ENCODE measurements at regions of chr18 and their contacts with region 1.

Region 1: DNA sequence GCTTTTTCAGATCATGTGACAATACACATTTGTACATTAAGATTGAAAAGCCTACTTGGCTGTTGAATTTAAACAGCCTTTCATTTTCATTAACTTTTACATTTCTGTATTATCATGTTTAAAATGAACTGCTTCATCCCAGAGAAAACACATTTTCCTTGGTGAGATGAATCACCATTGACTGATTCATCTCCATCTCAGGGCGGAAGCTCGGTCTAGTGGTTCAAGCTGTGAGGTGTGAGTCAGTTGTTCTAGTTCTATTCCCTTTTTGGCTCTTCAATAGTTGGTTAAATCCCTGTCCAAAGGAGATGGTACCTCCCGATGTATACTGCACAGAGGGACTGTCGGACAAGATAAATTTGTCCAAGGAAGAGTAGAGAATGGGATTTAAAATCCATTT is 189.7 kb downstream of the ADCYAP1 start:
- DNase-seq: no peak
- ATAC-seq: no peak
- H3K4me3 ChIP-seq: no peak overlapping the region
- H3K4me3 Mint-ChIP-seq: no peak overlapping the region
- H3K27ac ChIP-seq: no peak overlapping the region
- H3K27ac Mint-ChIP-seq: no peak overlapping the region
- H3K4me1 ChIP-seq: no peaks in the 10 kb centered on the region
- H3K4me1 Mint-ChIP-seq: no peaks in the 10 kb centered on the region
- H3K27me3 ChIP-seq: no peaks in the 10 kb centered on the region
- H3K27me3 Mint-ChIP-seq: peaks cover 0 to 3% (median 0%) of the 10 kb centered on the region in 5 donors

Region 2: DNA sequence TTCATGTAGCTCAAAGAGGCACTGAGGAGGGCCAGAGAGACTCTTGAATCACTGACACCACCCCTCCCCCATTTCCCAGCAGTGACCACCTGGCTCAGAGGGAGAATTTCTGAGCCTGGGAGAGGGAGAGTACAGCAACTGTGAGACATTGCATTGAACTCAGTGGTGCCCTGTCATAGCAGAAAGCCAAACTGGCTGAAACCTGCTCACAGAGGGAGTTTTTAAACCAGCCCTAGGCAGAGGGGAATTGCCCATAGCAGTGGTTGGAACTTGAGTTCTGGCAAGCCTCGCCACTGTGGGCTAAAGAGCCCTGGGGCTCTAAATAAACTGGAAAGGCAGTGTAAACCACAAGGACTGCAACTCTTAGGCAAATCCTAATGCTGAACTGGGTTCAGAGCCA is 53.3 kb after region 1 on chr18:
- CTCF ChIA-PET with region 1: no interaction called
- POLR2A ChIA-PET with region 1: no interaction called
- intact Hi-C with region 1: loop called in 1 of 2 experiments (anchors 2 kb)
- DNase-seq: no peak
- ATAC-seq: no peak
- H3K4me3 ChIP-seq: no peak overlapping the region
- H3K4me3 Mint-ChIP-seq: no peak overlapping the region
- H3K27ac ChIP-seq: no peak overlapping the region
- H3K27ac Mint-ChIP-seq: no peak overlapping the region
- H3K4me1 ChIP-seq: no peaks in the 10 kb centered on the region
- H3K4me1 Mint-ChIP-seq: no peaks in the 10 kb centered on the region
- H3K27me3 ChIP-seq: no peaks in the 10 kb centered on the region
- H3K27me3 Mint-ChIP-seq: no peaks in the 10 kb centered on the region

Region 3: DNA sequence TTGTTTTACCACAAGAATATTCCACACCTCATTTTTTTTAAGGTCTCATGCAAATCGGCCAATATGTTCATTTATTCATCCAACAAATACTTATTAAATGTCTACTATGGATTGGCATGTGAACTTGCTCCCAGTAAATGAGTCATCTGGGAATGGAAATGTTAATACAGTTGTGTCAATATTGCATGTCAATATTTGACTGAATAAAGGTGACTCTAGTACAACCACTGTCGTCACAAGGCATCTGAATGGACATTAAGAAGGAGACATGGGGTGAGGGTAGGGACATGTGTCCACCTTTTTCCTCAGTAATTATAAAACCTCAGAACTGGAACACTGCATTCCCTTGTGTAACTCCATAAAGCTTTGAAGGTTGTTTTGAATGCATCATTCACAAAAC is 175.7 kb after region 1 on chr18:
- CTCF ChIA-PET with region 1: no interaction called
- POLR2A ChIA-PET with region 1: no interaction called
- intact Hi-C with region 1: no loop called
- DNase-seq: no peak
- ATAC-seq: no peak
- H3K4me3 ChIP-seq: no peak overlapping the region
- H3K4me3 Mint-ChIP-seq: no peak overlapping the region
- H3K27ac ChIP-seq: no peak overlapping the region
- H3K27ac Mint-ChIP-seq: no peak overlapping the region
- H3K4me1 ChIP-seq: no peaks in the 10 kb centered on the region
- H3K4me1 Mint-ChIP-seq: no peaks in the 10 kb centered on the region
- H3K27me3 ChIP-seq: no peaks in the 10 kb centered on the region
- H3K27me3 Mint-ChIP-seq: peaks cover 0 to 4% (median 0%) of the 10 kb centered on the region in 5 donors

Measured in naive thymus-derived CD4-positive, alpha-beta T cell (primary cell).